PC-9 (cell line): ENCODE measurements at regions of chr7 and their contacts with region 1.

Region 1: DNA sequence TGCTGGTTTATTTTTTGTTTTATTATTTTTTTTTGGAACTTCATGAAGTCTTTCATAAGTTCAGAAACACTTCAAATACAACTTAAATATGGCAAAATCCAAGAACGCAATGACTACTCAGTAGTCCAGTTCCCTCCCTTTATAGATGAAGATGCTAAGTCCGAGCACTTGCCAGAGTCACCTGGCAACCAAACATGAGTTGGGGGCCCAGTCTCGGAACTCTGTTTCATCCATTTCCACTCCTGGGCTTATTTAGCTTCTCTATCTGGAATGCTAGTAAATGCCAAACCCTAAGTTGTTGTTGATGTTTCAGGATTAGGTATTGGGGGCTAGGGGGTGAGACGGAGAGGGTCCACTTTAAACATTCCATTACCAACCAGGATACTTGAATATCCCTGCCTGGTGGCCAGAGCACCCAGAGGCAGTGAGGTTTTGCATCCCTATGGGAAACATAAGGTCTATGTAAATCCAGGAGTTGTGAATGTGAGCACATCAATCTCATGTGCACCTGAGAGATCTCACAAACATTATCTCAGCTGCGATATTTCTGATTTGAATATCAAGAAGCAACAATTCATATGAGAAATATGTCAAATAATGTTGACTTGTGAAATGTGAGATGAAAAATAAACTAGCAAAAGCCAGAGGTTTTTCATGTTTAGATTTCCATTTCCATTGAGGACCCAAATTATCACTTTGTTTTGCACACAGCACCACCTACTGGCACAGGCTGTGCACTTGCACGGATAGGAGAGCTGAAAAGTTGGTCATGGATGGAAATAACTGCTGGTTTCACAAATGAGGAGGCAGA is 129.3 kb downstream of the PKD1L1 start:
- DNase-seq: peak; percentile 81 to 83
- H3K4me3 ChIP-seq: no peak overlapping the region
- H3K27ac ChIP-seq: peak overlapping the region; percentile 43
- H3K4me1 ChIP-seq: peaks cover 38% of the 10 kb centered on the region
- H3K27me3 ChIP-seq: no peaks in the 10 kb centered on the region
- CTCF ChIP-seq: peak; percentile 100

Region 2: DNA sequence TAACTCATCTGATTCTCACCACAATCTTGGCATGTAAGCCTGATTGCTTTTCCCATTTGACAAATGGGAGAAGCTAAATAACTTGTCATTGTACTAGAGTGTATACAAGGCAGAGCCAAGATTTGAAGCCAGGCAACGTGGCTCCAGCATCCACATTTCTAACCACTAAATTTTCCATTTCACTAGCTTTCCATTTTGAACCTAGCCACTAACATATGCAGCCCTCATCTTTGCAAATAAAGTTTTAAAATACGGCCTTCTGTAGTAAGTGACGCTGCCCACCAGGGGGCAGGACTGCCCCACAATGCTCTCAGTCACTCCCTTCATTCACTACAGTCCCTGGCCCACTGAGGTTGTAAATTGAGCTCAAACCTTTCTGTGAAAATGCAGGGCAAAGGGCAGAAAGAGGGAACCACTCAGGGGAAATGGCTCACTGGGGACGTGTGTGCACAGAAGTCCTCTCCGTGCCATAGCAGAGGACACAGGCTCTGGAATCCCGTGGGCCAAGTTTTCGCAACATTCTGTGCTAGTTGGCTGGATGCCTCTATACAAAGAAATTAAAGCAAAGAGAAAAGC is 552.8 kb before region 1 on chr7:
- CTCF ChIA-PET with region 1: interaction called, 11 read pairs
- POLR2A ChIA-PET with region 1: no interaction called
- intact Hi-C with region 1: loop called (anchors 1 kb)
- DNase-seq: peak; percentile 49 to 73
- H3K4me3 ChIP-seq: no peak overlapping the region
- H3K27ac ChIP-seq: no peak overlapping the region
- H3K4me1 ChIP-seq: peaks cover 10% of the 10 kb centered on the region
- H3K27me3 ChIP-seq: no peaks in the 10 kb centered on the region
- CTCF ChIP-seq: peak; percentile 100

Region 3: GRCh38 chr7:47482013-47482875 is 336.8 kb before region 1 on chr7:
- CTCF ChIA-PET with region 1: no interaction called
- POLR2A ChIA-PET with region 1: no interaction called
- intact Hi-C with region 1: loop called (anchors 2 kb)
- DNase-seq: peak; percentile 82 to 99
- H3K4me3 ChIP-seq: peak overlapping the region; percentile 15; the same call in 1 of the 2 replicates
- H3K27ac ChIP-seq: peak overlapping the region; percentile 90
- H3K4me1 ChIP-seq: peaks cover 85% of the 10 kb centered on the region
- H3K27me3 ChIP-seq: no peaks in the 10 kb centered on the region
- CTCF ChIP-seq: no peak

Region 4: DNA sequence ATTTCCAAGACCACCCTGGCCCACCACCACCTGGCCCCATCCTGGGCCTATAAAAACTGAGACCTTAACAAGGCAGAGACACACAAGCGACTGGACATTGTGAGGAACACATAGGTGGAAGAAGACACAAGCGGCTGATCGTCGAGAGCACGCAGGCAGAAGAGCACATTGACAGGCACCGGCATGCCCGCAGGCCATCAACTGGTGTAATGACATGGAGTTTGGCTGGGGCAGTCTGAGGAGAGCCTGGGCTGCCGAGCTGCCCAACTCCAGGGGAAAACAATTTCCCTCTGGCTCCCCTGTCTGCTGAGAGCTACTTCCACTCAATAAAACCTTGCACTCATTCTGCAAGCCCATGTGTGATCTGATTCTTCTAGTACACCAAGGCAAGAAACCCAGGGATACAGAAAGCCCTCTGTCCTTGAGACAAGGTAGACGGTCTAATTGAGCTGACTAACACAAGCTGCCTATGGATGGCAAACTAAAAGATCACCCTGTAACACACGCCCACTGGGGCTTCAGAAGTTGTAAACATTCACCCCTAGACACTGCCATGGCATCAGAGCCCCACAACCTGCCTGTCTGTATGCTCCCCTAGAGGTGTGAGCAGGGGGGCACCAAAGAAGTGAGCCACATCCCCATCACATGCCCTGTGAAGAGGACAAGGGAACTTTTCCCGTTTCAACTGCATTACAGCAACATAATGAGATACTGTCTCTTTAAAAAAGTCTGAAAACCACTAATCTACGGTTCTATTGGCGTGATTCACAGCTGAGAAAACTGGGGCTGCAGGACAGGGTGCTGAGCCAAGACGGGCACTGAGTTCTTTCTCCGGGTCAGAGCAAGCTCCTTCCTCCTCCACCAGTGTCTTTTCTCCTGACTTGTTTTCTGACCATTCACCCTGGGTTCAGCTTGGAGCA is 218.5 kb before region 1 on chr7:
- CTCF ChIA-PET with region 1: interaction called, 6 read pairs
- POLR2A ChIA-PET with region 1: no interaction called
- intact Hi-C with region 1: loop called (anchors 1 kb)
- DNase-seq: peak; percentile 70 to 88
- H3K4me3 ChIP-seq: peak overlapping the region; percentile 38; the same call in 1 of the 2 replicates
- H3K27ac ChIP-seq: peak overlapping the region; percentile 98
- H3K4me1 ChIP-seq: peaks cover 68% of the 10 kb centered on the region
- H3K27me3 ChIP-seq: no peaks in the 10 kb centered on the region
- CTCF ChIP-seq: no peak

Region 5: GRCh38 chr7:47690902-47691558 is 128.0 kb before region 1 on chr7:
- CTCF ChIA-PET with region 1: no interaction called
- POLR2A ChIA-PET with region 1: no interaction called
- intact Hi-C with region 1: loop called (anchors 1 kb)
- DNase-seq: peak; percentile 23 to 65
- H3K4me3 ChIP-seq: no peak overlapping the region
- H3K27ac ChIP-seq: peak overlapping the region; percentile 78
- H3K4me1 ChIP-seq: peaks cover 51% of the 10 kb centered on the region
- H3K27me3 ChIP-seq: no peaks in the 10 kb centered on the region
- CTCF ChIP-seq: no peak

Region 6: GRCh38 chr7:47914717-47915615 is 96.0 kb after region 1 on chr7:
- CTCF ChIA-PET with region 1: no interaction called
- POLR2A ChIA-PET with region 1: no interaction called
- intact Hi-C with region 1: no loop called
- DNase-seq: no peak
- H3K4me3 ChIP-seq: no peak overlapping the region
- H3K27ac ChIP-seq: no peak overlapping the region
- H3K4me1 ChIP-seq: 0 out of 2 replicates have a peak, but pooled peaks cover 6% of the 10 kb centered on the region
- H3K27me3 ChIP-seq: no peaks in the 10 kb centered on the region
- CTCF ChIP-seq: no peak

Region 7: GRCh38 chr7:47968847-47969774 is 150.1 kb after region 1 on chr7:
- CTCF ChIA-PET with region 1: no interaction called
- POLR2A ChIA-PET with region 1: no interaction called
- intact Hi-C with region 1: loop called (anchors 1 kb)
- DNase-seq: peak; percentile 64 to 66
- H3K4me3 ChIP-seq: no peak overlapping the region
- H3K27ac ChIP-seq: 0 out of 2 replicates have a peak overlapping the region, but pooled peaks have one; percentile 0
- H3K4me1 ChIP-seq: peaks cover 11% of the 10 kb centered on the region
- H3K27me3 ChIP-seq: no peaks in the 10 kb centered on the region
- CTCF ChIP-seq: peak; percentile 99